Posterior cingulate gyrus (tissue), 11 donors: ENCODE measurements at regions of chr12 and their contacts with region 1.

Region 1: GRCh38 chr12:6867413-6868210 is at the start of gene TPI1:
- DNase-seq: peak; percentile 75 to 98 (median 88)

Region 2: GRCh38 chr12:6570264-6570887 is 297.2 kb before region 1 on chr12:
- intact Hi-C with region 1: no loop called
- DNase-seq: peak in 3 of 10 donors; percentile 77 to 88 (median 86)

Region 3: DNA sequence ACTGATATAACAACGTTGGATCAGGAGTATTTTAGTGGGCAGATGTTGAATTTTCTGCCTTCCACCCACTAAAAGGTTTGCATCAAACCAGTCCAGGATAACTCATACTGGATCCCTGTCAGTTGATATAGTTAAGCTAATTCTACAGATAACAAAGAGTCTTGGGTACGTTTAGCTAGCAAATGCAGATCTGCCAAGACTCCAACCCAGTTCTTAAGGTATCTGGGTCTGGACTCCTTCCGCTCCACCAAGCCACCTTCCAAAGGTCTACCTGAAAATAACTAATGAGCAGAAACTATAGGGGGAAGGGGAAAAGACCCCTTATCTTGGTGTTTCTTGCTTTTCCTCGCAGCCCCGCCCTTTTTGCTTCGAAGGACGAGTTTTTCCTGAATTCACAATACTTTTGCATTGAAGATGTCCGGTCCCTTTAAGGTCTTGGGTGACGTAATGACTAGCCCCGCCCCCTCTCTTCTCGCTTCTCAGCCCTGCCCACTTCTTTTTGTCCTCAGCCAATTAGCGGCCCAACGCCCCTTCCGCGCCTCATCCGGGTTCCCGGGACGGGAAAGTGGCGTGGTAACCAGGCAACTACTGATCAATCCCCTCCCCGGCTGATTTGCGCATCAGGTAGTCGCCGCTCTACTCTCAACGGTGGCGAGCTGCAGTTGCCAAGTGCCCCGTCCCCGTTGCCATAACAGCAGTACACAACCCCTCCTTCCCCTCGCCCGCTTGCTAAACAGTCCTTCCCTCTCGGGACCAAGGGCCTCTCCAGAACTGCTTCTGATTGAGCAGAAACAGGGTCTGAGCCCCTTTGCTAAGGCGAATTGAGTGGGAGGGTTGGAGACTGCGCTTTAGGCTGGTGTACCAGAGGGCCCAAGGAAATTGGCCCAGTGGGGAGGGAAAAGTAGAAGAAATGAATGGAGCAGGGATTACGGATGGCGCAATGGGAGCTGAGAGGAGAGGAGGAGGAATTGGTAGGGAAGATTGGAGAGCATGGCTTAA is 37.0 kb after region 1 on chr12 and contains the start of gene LRRC23:
- intact Hi-C with region 1: loop called (anchors 2 kb)
- DNase-seq: peak; percentile 98 to 100 (median 99)

Region 4: DNA sequence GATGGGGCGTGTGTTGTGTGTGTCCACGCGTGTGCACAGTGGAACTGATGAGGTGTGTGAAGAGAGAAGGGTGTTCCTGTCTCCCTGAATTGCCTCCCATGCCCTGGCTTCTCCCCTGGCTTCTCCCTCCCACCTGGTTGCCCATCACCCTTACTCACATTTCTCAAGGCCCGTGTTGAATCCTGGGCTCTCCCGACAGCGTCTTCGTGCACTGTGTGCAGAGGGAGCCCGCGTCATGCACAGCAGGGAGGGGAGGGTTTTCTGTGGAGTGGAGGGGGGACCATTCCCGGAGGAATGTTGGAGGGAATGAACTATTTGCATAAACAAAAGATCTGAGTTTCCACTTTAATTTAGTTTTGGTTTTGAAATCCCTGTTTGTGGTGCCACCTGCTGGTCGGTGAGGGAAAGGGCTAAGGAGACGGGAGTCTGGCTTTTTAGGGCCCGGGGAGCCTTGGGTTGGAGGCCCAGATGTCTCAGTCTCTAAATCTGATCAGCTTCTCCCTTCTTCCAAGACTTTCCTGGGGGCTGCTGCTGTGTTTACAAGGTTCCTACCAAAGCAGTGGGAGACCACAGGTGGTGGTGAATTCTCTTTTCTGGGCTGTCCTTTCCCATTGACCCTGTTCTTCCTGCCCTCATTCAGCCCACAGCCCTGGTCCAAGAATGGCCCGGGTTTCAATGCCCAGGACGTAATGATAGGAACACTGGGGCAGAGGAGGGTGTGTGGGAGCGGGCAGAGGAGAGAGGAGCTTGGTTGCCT is 224.8 kb after region 1 on chr12 and contains the start of gene C1R:
- intact Hi-C with region 1: no loop called
- DNase-seq: peak in 7 of 10 donors; percentile 63 to 92 (median 69)